ENCODE measurements at regions of chr1 and their contacts with region 1.

Region 1: GRCh38 chr1:165073185-165074007 is 283.1 kb downstream of the LMX1A start:
- DNase-seq: no peak
- ATAC-seq: no peak
- H3K4me3 ChIP-seq: no peak overlapping the region
- H3K27ac ChIP-seq: no peak overlapping the region
- H3K4me1 ChIP-seq: no peaks in the 10 kb centered on the region
- H3K27me3 ChIP-seq: no peaks in the 10 kb centered on the region

Region 2: DNA sequence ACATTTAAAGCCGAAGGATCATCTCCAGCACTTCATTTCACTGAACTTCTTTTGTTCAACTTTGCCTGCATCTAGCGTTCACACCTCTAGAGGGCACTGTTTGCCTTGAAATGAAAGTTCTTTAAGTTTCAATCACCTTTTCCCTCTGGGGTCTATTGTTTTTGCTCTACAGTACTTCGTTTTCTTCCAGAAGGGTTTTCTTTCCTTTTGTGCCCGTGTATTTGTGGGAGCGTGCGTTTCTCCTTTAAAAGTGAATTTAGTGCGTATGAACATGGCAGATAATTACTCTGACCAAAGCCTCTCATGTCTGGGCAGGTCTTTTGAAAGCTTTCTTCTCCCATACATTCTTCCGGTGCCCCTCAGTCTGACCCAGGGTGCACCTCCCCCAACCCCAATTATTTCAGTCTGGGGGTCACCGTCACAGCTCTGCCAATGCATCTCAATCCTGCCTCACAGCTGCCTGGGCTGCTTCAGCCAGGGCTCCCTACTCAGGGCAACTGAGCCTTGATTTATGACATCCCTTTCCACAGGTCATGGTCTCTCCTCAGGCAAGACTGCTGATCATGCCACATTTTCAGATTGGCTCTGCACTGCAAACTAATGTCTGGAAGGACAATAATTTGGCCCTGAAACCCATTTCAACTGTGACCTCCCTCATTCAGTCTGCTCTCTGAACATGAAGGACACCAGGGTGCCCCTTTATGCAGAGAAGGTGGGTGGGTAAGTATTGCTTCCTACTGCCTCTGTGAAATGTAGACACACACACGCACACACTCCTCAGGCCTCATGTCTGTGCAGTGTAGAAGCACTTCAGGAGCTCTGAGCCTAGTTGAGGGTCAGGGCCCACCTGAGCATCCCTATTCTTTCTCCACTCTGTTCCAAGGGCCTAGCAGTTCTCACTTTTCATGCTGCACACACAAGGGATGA is 1663.1 kb before region 1 on chr1:
- intact Hi-C with region 1: loop called (anchors 5 to 10 kb)
- DNase-seq: no peak
- ATAC-seq: no peak
- H3K4me3 ChIP-seq: no peak overlapping the region
- H3K27ac ChIP-seq: no peak overlapping the region
- H3K4me1 ChIP-seq: no peaks in the 10 kb centered on the region
- H3K27me3 ChIP-seq: no peaks in the 10 kb centered on the region

Region 3: GRCh38 chr1:163535807-163536206 is 1537.6 kb before region 1 on chr1:
- intact Hi-C with region 1: loop called (anchors 10 kb)
- DNase-seq: no peak
- ATAC-seq: no peak
- H3K4me3 ChIP-seq: no peak overlapping the region
- H3K27ac ChIP-seq: no peak overlapping the region
- H3K4me1 ChIP-seq: no peaks in the 10 kb centered on the region
- H3K27me3 ChIP-seq: no peaks in the 10 kb centered on the region

Region 4: DNA sequence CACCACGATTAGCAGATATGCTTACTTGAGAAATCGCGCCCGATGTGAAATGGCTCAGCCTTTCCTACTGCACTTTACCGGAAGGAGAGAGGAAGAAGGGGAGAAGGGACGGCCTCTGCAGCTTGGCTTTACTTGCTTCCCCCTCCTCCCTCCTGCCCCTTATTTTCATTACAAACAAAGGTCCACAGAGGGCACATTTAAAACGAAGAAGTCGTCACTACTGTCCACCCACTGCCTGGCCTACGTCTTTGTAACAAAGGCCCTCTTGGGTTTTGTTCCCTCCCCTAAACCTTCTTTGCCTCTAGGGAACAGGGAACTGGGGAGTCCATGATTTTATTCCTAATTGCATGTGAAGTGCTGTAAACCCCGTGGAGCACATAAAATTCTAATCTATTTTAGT is 25.4 kb before region 1 on chr1:
- intact Hi-C with region 1: no loop called
- DNase-seq: no peak
- ATAC-seq: no peak
- H3K4me3 ChIP-seq: no peak overlapping the region
- H3K27ac ChIP-seq: no peak overlapping the region
- H3K4me1 ChIP-seq: no peaks in the 10 kb centered on the region
- H3K27me3 ChIP-seq: no peaks in the 10 kb centered on the region